Endothelial cell of umbilical vein (primary cell): ENCODE measurements at regions of chr9 and their contacts with region 1.

Region 1: DNA sequence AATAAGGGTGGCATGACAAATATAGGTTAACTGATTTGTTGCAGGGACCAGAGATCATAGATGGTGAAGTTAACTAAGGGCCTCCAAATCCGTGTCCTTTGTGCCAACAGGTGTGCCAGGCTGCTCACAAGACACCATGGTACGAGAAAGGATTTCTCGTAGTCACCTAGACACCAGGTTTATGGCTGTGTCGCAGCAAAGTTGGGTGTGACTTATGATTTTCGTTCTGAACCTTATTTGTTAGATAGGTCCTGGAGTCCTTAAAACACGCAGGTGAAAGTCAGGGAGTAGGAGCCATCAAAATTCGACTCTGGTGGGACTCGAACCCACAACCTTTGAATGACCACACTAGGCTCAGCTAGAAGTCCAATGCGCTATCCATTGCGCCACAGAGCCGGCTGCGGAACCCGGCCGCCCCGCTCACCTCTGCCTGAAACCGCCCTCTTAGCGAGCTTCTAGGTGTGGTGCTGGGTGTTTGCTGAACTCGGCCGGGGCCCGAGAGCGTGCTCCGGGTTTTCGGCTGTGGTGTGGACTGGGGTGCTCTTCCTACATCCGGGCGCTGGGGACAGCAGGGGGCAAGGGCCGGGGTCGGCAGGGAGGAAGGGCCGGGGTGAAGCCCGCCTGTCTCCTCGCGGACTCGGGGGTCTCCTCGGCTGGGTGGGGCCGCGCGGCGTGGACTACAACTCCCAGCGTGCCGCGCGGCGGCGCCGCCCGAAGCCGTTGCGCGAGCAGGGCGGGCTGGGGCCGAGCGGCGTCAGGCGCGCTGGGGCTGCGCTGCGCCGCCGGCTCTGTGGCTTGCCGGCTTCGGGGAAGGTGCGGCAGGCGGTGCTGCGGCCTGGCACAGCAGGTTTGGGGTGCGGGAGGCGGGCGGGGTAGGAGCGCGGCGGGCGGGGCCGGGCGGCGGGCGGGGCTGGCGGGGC is at the start of gene SLC27A4:
- DNase-seq: peak; percentile 68
- H3K4me3 ChIP-seq: peak within 1 kb of the TSS; percentile 57 to 79 (median 78)
- H3K27ac ChIP-seq: no peak within 1 kb of the TSS
- H3K4me1 ChIP-seq: peaks cover 7% of the 10 kb centered on the region
- H3K27me3 ChIP-seq: no peaks in the 10 kb centered on the region
- CTCF ChIP-seq: no peak
- POLR2A ChIP-seq: peak; percentile 75
- total RNA-seq, gene SLC27A4: 35.0 and 36.9 TPM in 2 replicates

Region 2: DNA sequence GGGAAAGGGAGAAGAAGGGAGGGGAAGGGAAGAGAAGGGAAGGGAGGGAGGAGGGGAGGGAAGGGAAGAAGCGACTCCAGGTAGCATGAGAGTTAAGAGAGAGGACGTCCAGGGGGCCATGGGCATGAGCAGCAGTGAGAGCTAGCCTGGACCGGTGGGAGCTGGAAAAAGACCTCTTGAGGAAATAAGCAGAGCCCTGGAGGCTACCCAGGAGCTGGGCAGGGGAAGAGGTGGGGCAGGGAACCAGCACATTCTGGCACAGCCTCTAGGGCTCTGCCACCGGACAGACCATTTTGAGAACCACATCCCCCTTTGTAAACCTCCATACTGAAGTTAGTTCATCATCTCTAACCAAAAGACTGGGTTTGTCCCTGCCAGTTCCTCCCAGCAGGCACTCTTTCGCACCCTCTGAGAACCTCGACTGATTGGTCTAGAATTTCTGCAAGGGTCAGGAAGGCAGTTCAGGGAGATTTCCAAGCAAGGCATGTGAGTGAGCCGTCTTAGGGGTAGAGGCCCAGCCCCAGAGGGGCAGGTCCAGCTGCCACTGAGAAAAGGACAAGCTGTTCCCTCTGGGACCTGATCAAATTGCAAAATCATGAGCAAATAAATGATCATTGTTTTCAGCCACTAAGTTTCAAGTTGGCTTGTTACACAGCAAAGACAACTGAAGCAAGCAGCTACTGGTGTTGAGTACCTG is 284.5 kb before region 1 on chr9:
- CTCF ChIA-PET with region 1: no interaction called
- POLR2A ChIA-PET with region 1: no interaction called
- dilution Hi-C with region 1: no loop called
- intact Hi-C with region 1: no loop called
- DNase-seq: no peak
- H3K4me3 ChIP-seq: no peak overlapping the region
- H3K27ac ChIP-seq: no peak overlapping the region
- H3K4me1 ChIP-seq: peaks cover 2% of the 10 kb centered on the region
- H3K27me3 ChIP-seq: no peaks in the 10 kb centered on the region
- CTCF ChIP-seq: no peak
- POLR2A ChIP-seq: no peak

Region 3: DNA sequence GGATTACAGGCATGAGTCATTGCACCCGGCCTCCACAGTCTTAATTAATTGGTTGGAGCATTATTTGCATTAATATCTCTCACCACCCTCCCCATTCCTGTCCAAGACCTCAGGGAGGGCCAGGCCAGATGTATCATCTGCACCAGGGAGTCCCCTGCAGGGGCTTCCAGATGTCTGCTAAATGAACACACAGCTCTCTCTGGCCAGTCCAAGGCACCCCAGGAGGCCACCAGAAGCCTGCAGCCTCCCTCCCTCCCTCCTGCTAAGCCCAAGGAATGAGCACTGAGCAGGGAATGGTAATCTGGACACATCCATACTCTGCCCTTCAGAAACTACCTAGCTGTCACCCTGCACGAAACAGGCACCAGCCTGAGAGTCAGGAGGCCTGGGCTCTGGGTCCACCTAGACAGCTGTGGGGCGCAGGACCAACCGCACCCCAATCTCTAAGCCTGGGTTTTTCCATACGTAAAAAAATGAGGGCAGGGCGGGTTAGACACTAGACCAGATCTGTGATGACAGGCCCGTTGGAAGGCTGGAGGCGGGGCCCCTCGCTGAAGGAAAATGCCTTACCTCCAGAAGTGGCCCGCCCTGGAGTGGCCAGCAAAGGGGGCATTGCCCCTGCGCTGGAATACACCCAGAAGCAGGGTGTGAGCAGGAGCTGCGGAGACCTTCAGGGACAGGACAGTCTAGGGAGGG is 157.0 kb before region 1 on chr9:
- CTCF ChIA-PET with region 1: interaction called, 5 read pairs
- POLR2A ChIA-PET with region 1: no interaction called
- dilution Hi-C with region 1: no loop called
- intact Hi-C with region 1: loop called (anchors 5 kb)
- DNase-seq: no peak
- H3K4me3 ChIP-seq: no peak overlapping the region
- H3K27ac ChIP-seq: no peak overlapping the region
- H3K4me1 ChIP-seq: no peaks in the 10 kb centered on the region
- H3K27me3 ChIP-seq: no peaks in the 10 kb centered on the region
- CTCF ChIP-seq: no peak
- POLR2A ChIP-seq: no peak

Region 4: DNA sequence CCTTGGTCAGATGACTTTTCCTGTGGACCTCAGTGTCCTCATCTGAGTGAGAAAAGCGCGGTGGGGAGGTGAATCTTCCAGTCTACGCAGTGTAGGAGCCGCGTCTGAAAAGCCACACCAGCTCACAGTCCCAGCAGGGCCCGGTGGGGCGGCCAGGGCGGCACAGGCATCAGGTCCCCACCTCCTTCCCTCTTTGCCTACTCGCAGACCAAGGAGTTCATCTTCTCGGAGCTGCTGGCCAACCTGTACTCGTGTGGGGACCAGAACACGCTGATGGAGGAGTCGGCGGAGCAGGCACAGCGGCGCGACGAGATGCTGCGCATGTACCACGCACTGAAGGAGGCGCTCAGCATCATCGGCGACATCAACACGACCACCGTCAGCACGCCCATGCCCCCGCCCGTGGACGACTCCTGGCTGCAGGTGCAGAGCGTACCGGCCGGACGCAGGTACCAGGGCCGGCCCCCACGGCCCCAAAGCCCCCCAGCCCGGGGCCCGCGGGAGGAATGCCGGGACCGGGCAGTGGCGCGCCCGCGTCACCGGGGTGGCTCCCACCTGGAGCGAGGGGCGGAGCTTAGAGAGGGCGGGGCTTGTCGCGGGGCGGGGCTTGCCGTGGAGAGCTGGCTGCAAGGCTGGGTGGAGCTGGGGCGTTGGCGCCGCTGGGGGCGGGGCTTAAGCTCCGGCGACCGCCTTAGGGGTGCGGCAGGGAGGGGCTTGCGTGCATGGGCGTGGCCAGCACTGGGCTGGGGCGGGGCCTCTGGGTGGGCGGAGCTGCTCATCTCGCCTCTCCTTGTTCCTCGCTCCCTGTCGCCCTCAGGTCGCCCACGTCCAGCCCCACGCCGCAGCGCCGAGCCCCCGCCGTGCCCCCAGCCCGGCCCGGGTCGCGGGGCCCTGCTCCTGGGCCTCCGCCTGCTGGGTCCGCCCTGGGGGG is 89.9 kb before region 1 on chr9:
- CTCF ChIA-PET with region 1: interaction called, 7 read pairs
- POLR2A ChIA-PET with region 1: no interaction called
- dilution Hi-C with region 1: no loop called
- intact Hi-C with region 1: loop called (anchors 1 kb)
- DNase-seq: peak; percentile 82
- H3K4me3 ChIP-seq: peak overlapping the region; percentile 34 to 52 (median 36)
- H3K27ac ChIP-seq: no peak overlapping the region
- H3K4me1 ChIP-seq: peaks cover 28% of the 10 kb centered on the region
- H3K27me3 ChIP-seq: no peaks in the 10 kb centered on the region
- CTCF ChIP-seq: no peak
- POLR2A ChIP-seq: no peak

Region 5: DNA sequence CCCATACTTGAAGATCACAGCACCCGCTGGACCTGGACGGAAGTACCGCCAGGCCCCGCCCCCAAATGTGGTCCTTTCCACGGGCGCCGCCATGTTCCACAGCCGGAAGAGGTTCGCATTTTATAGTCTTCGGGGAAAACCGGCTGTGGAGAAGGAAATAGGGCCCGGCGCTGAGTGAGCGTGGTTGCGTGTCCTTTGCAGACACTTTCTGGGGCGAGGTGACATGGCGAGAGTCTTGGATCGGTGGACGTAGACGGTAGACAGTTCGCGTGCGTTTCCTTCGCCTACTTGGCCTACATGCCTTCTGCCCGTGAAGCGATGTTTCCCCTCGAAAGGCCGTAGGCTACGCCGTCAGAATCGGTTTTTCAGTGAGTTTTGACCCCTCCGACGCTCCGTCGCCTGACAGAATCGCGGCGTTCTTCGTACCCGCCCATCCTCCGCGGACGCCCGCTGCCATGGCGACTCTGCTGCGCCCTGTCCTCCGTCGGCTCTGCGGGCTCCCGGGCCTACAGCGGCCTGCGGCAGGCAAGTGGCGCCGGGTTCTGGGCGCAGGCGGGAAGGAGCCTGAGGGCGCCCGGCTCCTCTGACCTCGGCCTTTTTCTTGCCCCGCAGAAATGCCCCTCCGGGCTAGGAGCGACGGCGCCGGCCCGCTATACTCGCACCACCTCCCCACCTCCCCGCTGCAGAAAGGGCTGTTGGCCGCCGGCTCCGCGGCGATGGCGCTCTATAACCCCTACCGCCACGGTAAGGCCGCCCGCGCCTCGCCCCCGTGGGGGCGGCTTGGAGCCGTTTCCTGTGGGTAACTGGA is 17.4 kb before region 1 on chr9 and contains the starts of genes COQ4 and TRUB2:
- CTCF ChIA-PET with region 1: interaction called, 7 read pairs
- POLR2A ChIA-PET with region 1: no interaction called
- dilution Hi-C with region 1: no loop called
- intact Hi-C with region 1: loop called (anchors 1 kb)
- DNase-seq: peak; percentile 95
- H3K4me3 ChIP-seq: peak within 1 kb of the TSS; percentile 83 to 92 (median 83)
- H3K27ac ChIP-seq: peak within 1 kb of the TSS; percentile 56
- H3K4me1 ChIP-seq: peaks cover 12% of the 10 kb centered on the region
- H3K27me3 ChIP-seq: no peaks in the 10 kb centered on the region
- CTCF ChIP-seq: no peak
- POLR2A ChIP-seq: peak; percentile 72
- total RNA-seq, gene COQ4: 44.4 and 46.6 TPM in 2 replicates
- total RNA-seq, gene TRUB2: 35.4 and 39.3 TPM in 2 replicates

Region 6: DNA sequence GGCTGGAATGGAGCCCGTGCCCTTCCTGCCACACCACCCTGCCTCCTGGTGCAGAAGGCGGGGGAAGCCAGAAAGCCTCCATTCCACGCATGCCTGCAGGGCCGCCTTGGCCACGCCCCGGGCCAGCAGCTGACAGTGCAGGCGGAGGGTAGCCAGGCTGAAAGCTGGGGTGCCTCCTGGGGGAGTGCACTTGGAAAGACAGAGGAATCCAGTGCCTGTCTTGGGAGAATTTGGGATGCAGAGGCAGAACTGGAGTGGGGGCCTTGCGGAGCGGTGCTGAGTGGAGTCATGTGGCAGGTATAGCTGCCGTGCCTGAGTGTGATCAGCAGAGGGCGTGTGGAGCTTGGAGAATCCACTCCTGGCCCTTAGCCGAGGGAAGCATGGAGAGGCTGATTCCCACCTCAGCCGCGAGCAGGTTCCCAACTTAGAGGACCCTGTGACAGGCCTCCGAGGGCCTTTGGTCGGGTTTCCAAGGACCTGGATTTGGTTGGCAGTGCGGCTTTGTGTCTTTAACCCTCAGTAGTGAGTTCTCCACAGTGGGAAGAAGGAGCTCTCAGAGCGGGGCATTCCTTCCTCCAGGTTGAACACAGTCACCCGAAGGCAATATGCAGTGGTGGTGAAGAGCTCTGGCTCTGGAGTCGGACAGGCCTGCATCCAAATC is 22.1 kb after region 1 on chr9:
- CTCF ChIA-PET with region 1: interaction called, 11 read pairs
- POLR2A ChIA-PET with region 1: no interaction called
- dilution Hi-C with region 1: no loop called
- intact Hi-C with region 1: loop called (anchors 1 kb)
- DNase-seq: peak; percentile 87
- H3K4me3 ChIP-seq: peak overlapping the region in 2 of 3 experiments; percentile 37 to 48
- H3K27ac ChIP-seq: no peak overlapping the region
- H3K4me1 ChIP-seq: peaks cover 17% of the 10 kb centered on the region
- H3K27me3 ChIP-seq: no peaks in the 10 kb centered on the region
- CTCF ChIP-seq: peak; percentile 79 to 92
- POLR2A ChIP-seq: peak; percentile 66

Region 7: DNA sequence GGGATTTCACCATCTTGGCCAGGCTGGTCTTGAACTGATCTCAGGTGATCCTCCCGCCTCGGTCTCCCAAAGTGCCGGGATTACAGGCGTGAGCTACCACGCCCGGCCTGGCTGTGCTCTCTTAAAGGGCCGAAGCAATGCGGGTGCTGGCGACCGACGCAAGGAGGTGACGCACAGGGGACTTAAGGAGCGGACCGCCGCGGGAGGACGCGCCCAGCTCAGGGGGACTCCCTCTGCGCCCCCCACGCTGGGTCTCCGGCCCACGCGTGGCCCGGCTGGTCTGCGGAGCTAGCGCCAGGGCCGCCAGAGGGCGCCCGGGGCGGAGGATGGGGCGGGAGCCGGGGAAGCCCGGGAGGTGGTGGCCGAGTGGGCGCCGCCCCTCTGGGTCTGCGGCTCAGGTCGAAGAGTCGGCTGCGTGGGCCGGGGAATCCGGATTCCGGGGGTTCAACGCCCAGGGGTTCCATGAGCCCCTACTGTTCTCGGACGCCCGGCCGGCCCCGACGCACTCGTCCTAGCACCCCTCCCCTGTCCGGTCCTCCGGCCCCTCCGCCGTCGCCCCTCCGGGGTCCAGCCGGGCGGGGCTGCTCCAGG is 80.1 kb after region 1 on chr9:
- CTCF ChIA-PET with region 1: interaction called, 13 read pairs
- POLR2A ChIA-PET with region 1: no interaction called
- dilution Hi-C with region 1: no loop called
- intact Hi-C with region 1: no loop called
- DNase-seq: peak; percentile 63
- H3K4me3 ChIP-seq: peak overlapping the region; percentile 53 to 65 (median 59)
- H3K27ac ChIP-seq: no peak overlapping the region
- H3K4me1 ChIP-seq: peaks cover 13% of the 10 kb centered on the region
- H3K27me3 ChIP-seq: peaks cover 6 to 9% of the 10 kb centered on the region in 2 experiments
- CTCF ChIP-seq: peak; percentile 85 to 89
- POLR2A ChIP-seq: peak; percentile 28